ENCODE measurements at regions of chr22 and their contacts with region 1.

Region 1: DNA sequence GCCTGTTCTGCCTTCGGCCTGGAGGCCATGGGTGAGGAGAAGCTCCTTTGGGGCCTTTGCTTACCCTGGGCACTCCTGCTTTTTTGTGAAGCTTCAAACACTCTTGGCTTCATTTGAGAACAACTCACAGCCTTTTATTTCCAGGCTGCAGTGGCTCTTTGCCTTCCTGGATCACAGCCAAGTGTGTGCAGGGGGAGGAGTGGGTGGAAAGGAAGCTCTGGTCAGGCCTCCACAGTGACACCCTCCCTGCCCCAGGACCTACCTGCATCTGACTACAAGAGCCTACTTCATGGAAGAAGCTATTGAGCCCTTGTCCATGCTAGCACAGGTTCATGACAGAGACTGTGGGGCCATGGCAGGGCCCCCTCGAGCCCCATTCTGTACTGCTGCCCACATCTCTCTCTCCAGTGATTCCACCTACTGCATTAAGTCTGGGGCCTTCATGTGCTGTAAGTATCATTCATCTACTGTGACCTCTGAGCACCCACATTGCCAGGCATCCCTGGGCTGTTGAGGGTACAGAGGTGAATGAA is 52.3 kb downstream of the GAB4 start:
- DNase-seq: no peak

Region 2: GRCh38 chr22:17106785-17107546 is 151.2 kb after region 1 on chr22:
- in situ Hi-C with region 1: no loop called
- DNase-seq: peak; percentile 56

Region 3: DNA sequence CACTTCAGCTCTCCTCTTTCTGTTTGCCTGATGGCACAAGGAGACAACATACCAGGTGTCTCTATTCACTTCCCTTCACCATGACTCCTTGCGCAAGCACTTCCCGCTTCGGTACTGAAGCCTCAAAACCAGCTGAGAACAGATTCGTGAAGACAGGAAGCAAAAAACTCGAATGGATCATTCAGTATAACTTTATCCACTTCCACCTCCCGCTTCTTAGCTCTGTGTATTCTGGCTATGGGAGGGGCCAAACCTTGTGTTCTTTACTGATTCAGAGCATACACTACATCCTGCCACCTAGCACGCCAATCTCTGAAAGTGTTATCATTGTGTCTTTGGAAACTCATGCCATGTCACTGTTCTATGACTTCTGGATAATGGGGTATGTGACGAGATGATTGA is 325.7 kb after region 1 on chr22:
- in situ Hi-C with region 1: loop called (anchors 25 kb)
- DNase-seq: no peak

Region 4: GRCh38 chr22:17359501-17359900 is 403.8 kb after region 1 on chr22:
- in situ Hi-C with region 1: no loop called
- DNase-seq: peak; percentile 75

Region 5: GRCh38 chr22:17436382-17436980 is 480.7 kb after region 1 on chr22:
- in situ Hi-C with region 1: loop called (anchors 25 kb)
- DNase-seq: peak; percentile 21